GM12878 (cell line): ENCODE measurements at regions of chr11 and their contacts with region 1.

Region 1: GRCh38 chr11:60345489-60345888 is 18.4 kb downstream of the MS4A6E start:
- DNase-seq: no peak
- ATAC-seq: peak; percentile 87
- H3K4me3 ChIP-seq: no peak overlapping the region
- H3K27ac ChIP-seq: no peak overlapping the region
- H3K4me1 ChIP-seq: peaks cover 11% of the 10 kb centered on the region
- H3K27me3 ChIP-seq: no peaks in the 10 kb centered on the region
- CTCF ChIP-seq: peak; percentile 63 to 68 (median 66)
- EP300 ChIP-seq: no peak
- POLR2A ChIP-seq: no peak
- RAD21 ChIP-seq: peak; percentile 64

Region 2: DNA sequence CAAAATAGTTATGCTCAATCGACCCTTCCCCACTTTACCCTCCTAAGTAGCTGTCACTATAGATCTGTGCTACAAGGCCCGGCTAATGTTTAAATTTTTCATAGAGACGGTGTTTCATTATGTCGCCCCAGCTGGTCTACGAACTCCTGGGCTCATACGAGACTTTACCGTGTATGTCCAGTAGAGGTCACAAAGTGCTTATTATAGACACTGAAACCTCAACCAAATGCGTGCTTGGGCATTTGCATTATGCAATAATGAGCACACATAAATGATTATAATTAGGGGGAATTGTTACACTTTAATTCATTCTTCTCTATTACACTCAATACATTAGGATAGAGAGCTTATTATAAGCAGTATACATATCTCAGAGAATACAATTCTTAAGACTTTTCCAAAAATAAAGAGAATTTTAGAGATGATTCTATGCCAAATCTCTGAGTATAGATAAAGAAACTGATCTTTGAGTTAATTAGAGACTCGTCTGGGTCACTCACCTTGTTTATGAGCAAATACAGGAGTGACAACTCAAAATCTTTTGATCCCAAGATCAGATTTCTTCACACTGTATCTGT is 522.4 kb before region 1 on chr11:
- CTCF ChIA-PET with region 1: interaction called, 3 read pairs
- POLR2A ChIA-PET with region 1: no interaction called
- RAD21 ChIA-PET with region 1: no interaction called
- SMC1A ChIA-PET with region 1: interaction called, 5 read pairs
- in situ Hi-C with region 1: no loop called
- intact Hi-C with region 1: loop called (anchors 10 kb)
- DNase-seq: no peak
- ATAC-seq: peak; percentile 98
- H3K4me3 ChIP-seq: no peak overlapping the region
- H3K27ac ChIP-seq: no peak overlapping the region
- H3K4me1 ChIP-seq: peaks cover 5% of the 10 kb centered on the region; the same call in 1 of the 2 replicates
- H3K27me3 ChIP-seq: no peaks in the 10 kb centered on the region
- CTCF ChIP-seq: peak; percentile 48 to 72 (median 61); a peak in 5 of 6 replicates
- EP300 ChIP-seq: no peak
- POLR2A ChIP-seq: no peak
- RAD21 ChIP-seq: peak; percentile 81

Region 3: GRCh38 chr11:59957094-59957493 is 388.4 kb before region 1 on chr11:
- CTCF ChIA-PET with region 1: no interaction called
- POLR2A ChIA-PET with region 1: no interaction called
- RAD21 ChIA-PET with region 1: no interaction called
- SMC1A ChIA-PET with region 1: no interaction called
- in situ Hi-C with region 1: no loop called
- intact Hi-C with region 1: no loop called
- DNase-seq: no peak
- ATAC-seq: no peak
- H3K4me3 ChIP-seq: no peak overlapping the region
- H3K27ac ChIP-seq: no peak overlapping the region
- H3K4me1 ChIP-seq: no peaks in the 10 kb centered on the region
- H3K27me3 ChIP-seq: no peaks in the 10 kb centered on the region
- CTCF ChIP-seq: no peak
- EP300 ChIP-seq: no peak
- POLR2A ChIP-seq: no peak
- RAD21 ChIP-seq: no peak

Region 4: DNA sequence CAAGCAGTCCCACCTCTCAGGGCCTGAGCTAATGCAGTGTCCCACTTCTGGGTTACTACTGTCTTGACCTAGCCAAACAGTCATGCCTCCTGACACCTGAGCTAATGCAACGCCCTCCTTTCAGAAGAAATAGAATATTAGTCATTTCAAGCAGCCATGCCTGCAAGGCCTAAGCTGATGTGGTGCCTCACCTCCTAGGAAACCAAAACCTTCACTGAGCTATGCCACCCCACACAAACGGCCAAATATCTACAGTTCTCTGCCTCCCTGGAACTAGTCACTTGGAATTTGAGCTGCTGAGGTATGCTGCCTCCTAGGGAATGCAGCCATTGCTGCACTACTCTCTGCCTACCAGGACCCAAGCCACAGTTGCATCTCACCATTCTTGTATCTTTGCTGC is 26.8 kb before region 1 on chr11:
- CTCF ChIA-PET with region 1: interaction called, 59 read pairs
- POLR2A ChIA-PET with region 1: no interaction called
- RAD21 ChIA-PET with region 1: no interaction called
- SMC1A ChIA-PET with region 1: interaction called, 9 read pairs
- in situ Hi-C with region 1: no loop called
- intact Hi-C with region 1: no loop called
- DNase-seq: no peak
- ATAC-seq: peak; percentile 73
- H3K4me3 ChIP-seq: no peak overlapping the region
- H3K27ac ChIP-seq: no peak overlapping the region
- H3K4me1 ChIP-seq: peaks cover 24% of the 10 kb centered on the region; the same call in 1 of the 2 replicates
- H3K27me3 ChIP-seq: no peaks in the 10 kb centered on the region
- CTCF ChIP-seq: no peak
- EP300 ChIP-seq: no peak
- POLR2A ChIP-seq: no peak
- RAD21 ChIP-seq: no peak

Region 5: DNA sequence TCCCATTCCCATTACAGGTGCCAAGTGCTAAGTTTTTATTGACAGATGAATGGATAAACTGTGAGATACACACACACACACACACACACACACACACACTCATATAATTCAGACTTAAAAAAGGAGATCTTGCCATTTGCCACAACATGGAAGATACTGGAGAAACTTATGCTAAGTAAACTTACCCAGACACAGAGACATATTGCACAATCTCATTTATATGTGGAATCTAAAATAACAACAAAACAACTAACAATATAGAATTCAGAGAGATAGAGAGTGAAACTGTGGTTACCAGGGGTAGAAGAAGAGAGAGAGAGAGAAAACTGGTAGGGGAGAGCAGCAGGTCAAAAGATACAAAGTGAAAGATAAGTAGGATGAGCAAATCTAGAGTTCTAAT is 17.0 kb before region 1 on chr11:
- CTCF ChIA-PET with region 1: interaction called, 135 read pairs
- POLR2A ChIA-PET with region 1: no interaction called
- RAD21 ChIA-PET with region 1: interaction called, 30 read pairs
- SMC1A ChIA-PET with region 1: interaction called, 68 read pairs
- in situ Hi-C with region 1: no loop called
- intact Hi-C with region 1: no loop called
- DNase-seq: no peak
- ATAC-seq: no peak
- H3K4me3 ChIP-seq: no peak overlapping the region
- H3K27ac ChIP-seq: no peak overlapping the region
- H3K4me1 ChIP-seq: no peaks in the 10 kb centered on the region
- H3K27me3 ChIP-seq: no peaks in the 10 kb centered on the region
- CTCF ChIP-seq: no peak
- EP300 ChIP-seq: no peak
- POLR2A ChIP-seq: no peak
- RAD21 ChIP-seq: no peak

Region 6: GRCh38 chr11:60485986-60486385 is 140.5 kb after region 1 on chr11:
- CTCF ChIA-PET with region 1: interaction called, 51 read pairs
- POLR2A ChIA-PET with region 1: no interaction called
- RAD21 ChIA-PET with region 1: interaction called, 13 read pairs
- SMC1A ChIA-PET with region 1: interaction called, 31 read pairs
- in situ Hi-C with region 1: no loop called
- intact Hi-C with region 1: loop called (anchors 5 kb)
- DNase-seq: peak; percentile 86
- ATAC-seq: peak; percentile 100
- H3K4me3 ChIP-seq: no peak overlapping the region
- H3K27ac ChIP-seq: no peak overlapping the region
- H3K4me1 ChIP-seq: peaks cover 9% of the 10 kb centered on the region
- H3K27me3 ChIP-seq: no peaks in the 10 kb centered on the region
- CTCF ChIP-seq: peak; percentile 91 to 100 (median 99); a peak in 5 of 6 replicates
- EP300 ChIP-seq: no peak
- POLR2A ChIP-seq: no peak
- RAD21 ChIP-seq: peak; percentile 93

Region 7: DNA sequence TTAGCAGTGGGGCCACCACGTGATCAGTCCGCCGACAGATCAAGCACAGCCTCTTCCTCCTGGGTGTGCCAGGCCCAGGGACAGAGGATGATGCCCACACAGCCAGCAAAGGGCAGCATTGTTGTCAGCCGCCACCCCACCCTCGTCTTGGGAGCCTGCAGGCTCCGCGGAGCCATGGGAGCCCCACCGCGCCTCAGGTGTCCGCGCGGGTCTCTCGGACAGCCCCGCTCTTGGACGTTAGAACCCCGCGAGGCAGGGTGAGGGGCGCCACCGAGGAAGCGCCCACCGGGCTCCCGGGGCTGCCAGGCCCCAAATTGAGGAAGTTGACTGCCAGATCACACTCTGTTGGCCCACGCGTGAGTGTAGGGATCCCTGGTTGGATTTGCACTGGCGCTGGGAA is 270.0 kb after region 1 on chr11:
- CTCF ChIA-PET with region 1: interaction called, 37 read pairs
- POLR2A ChIA-PET with region 1: no interaction called
- RAD21 ChIA-PET with region 1: interaction called, 13 read pairs
- SMC1A ChIA-PET with region 1: interaction called, 7 read pairs
- in situ Hi-C with region 1: no loop called
- intact Hi-C with region 1: no loop called
- DNase-seq: no peak
- ATAC-seq: no peak
- H3K4me3 ChIP-seq: no peak overlapping the region
- H3K27ac ChIP-seq: no peak overlapping the region
- H3K4me1 ChIP-seq: no peaks in the 10 kb centered on the region
- H3K27me3 ChIP-seq: no peaks in the 10 kb centered on the region
- CTCF ChIP-seq: no peak
- EP300 ChIP-seq: no peak
- POLR2A ChIP-seq: no peak
- RAD21 ChIP-seq: no peak

Region 8: GRCh38 chr11:60625262-60625661 is 279.8 kb after region 1 on chr11:
- CTCF ChIA-PET with region 1: interaction called, 37 read pairs
- POLR2A ChIA-PET with region 1: no interaction called
- RAD21 ChIA-PET with region 1: no interaction called
- SMC1A ChIA-PET with region 1: interaction called, 7 read pairs
- in situ Hi-C with region 1: no loop called
- intact Hi-C with region 1: no loop called
- DNase-seq: no peak
- ATAC-seq: peak; percentile 61
- H3K4me3 ChIP-seq: no peak overlapping the region
- H3K27ac ChIP-seq: no peak overlapping the region
- H3K4me1 ChIP-seq: no peaks in the 10 kb centered on the region
- H3K27me3 ChIP-seq: no peaks in the 10 kb centered on the region
- CTCF ChIP-seq: peak; percentile 17 to 22 (median 20); a peak in 3 of 6 replicates
- EP300 ChIP-seq: no peak
- POLR2A ChIP-seq: no peak
- RAD21 ChIP-seq: no peak